Calu3 (cell line): ENCODE measurements at regions of chr10 and their contacts with region 1.

Region 1: GRCh38 chr10:58662314-58662713 is 149.6 kb downstream of the BICC1 start:
- DNase-seq: peak; percentile 48
- H3K4me3 Mint-ChIP-seq: no peak overlapping the region
- H3K27ac Mint-ChIP-seq: peak overlapping the region; percentile 73
- H3K4me1 Mint-ChIP-seq: peaks cover 58% of the 10 kb centered on the region
- H3K27me3 Mint-ChIP-seq: no peaks in the 10 kb centered on the region
- CTCF ChIP-seq: no peak

Region 2: GRCh38 chr10:58435297-58435985 is 226.9 kb before region 1 on chr10:
- CTCF ChIA-PET with region 1: interaction called, 4 read pairs
- intact Hi-C with region 1: loop called (anchors 10 kb)
- DNase-seq: peak; percentile 78
- H3K4me3 Mint-ChIP-seq: peak overlapping the region; percentile 48
- H3K27ac Mint-ChIP-seq: peak overlapping the region; percentile 89
- H3K4me1 Mint-ChIP-seq: peaks cover 57% of the 10 kb centered on the region
- H3K27me3 Mint-ChIP-seq: no peaks in the 10 kb centered on the region
- CTCF ChIP-seq: no peak

Region 3: GRCh38 chr10:58555170-58555929 is 107.0 kb before region 1 on chr10:
- CTCF ChIA-PET with region 1: interaction called, 3 read pairs
- intact Hi-C with region 1: loop called (anchors 10 kb)
- DNase-seq: peak; percentile 51
- H3K4me3 Mint-ChIP-seq: peak overlapping the region; percentile 22
- H3K27ac Mint-ChIP-seq: peak overlapping the region; percentile 89
- H3K4me1 Mint-ChIP-seq: peaks cover 66% of the 10 kb centered on the region
- H3K27me3 Mint-ChIP-seq: no peaks in the 10 kb centered on the region
- CTCF ChIP-seq: no peak

Region 4: DNA sequence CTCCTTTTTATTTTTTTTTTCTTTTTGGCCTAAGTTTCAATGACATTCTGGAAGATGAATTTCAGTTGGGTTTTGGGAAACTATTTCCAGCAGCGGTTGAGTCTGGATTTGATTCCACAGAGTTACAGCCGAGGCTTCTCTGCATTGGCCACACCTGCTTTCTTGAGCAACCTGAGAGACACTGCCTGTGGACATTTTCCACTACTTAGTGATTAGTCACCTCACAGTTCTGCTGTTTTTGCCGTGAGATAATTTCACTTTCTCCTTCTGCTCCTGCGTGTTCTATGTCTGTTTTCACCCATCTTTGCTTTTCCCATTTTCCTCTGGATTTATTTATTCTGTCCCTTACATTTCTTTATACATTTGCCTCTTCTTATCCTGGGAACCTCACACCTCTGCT is 93.4 kb after region 1 on chr10:
- CTCF ChIA-PET with region 1: interaction called, 3 read pairs
- intact Hi-C with region 1: loop called (anchors 5 kb)
- DNase-seq: peak; percentile 49
- H3K4me3 Mint-ChIP-seq: peak overlapping the region; percentile 60
- H3K27ac Mint-ChIP-seq: peak overlapping the region; percentile 35
- H3K4me1 Mint-ChIP-seq: peaks cover 53% of the 10 kb centered on the region
- H3K27me3 Mint-ChIP-seq: no peaks in the 10 kb centered on the region
- CTCF ChIP-seq: no peak